ENCODE measurements at regions of chr1 and their contacts with region 1.

Region 1: DNA sequence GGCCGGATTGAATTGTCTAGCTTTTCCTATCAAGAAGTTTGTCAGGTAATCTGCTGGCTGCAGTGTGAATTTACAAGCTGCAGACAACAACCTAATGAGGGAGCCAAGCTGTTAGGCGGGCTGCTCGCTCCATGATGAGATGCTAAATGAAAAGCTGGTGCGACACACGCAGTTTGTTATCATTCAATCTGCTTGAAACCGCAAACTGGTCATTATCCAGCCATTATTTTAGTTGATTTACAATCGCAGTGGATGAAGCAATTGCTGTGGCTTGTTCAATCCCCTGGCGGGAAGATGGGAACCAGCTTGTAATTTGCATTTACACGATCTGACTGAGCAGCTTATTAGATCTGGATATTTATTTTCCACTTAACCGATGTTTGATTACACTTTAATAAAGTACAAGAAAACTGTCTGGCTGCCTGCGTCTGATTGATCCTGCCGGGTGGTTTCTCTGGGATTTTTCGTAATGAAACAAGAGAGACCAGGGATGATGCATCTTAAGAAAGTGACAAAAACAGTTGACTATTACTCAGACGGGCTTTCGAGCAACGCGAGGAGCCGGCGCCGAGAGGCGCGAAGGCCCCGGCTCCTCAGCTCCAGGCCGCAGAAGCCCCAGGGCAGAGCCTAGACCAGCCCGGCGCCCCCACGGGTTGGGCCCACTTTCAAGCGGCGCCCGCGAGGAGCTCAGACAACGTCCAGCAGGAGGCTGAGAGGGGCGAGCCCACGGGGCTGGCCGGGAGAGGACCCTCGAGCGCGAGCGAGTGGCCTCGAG is 118.0 kb upstream of the BARHL2 start:
- DNase-seq: peak in 2 of 9 experiments; percentile 7 to 18
- ATAC-seq: no peak
- H3K4me3 ChIP-seq: peak overlapping the region in 1 of 2 experiments; percentile 1
- H3K4me3 Mint-ChIP-seq: peak overlapping the region; percentile 38
- H3K27ac ChIP-seq: no peak overlapping the region
- H3K27ac Mint-ChIP-seq: no peak overlapping the region
- H3K4me1 ChIP-seq: peaks cover 24% of the 10 kb centered on the region
- H3K4me1 Mint-ChIP-seq: peaks cover 19% of the 10 kb centered on the region
- H3K27me3 ChIP-seq: peaks cover 48 to 67% of the 10 kb centered on the region in 2 experiments
- H3K27me3 Mint-ChIP-seq: peaks cover 80% of the 10 kb centered on the region
- CTCF ChIP-seq: no peak

Region 2: GRCh38 chr1:90721210-90722194 is 113.6 kb before region 1 on chr1:
- CTCF ChIA-PET with region 1: no interaction called
- POLR2A ChIA-PET with region 1: no interaction called
- intact Hi-C with region 1: loop called in 1 of 2 experiments (anchors 10 kb)
- DNase-seq: peak in 6 of 9 experiments; percentile 20 to 69 (median 46)
- ATAC-seq: peak; percentile 50
- H3K4me3 ChIP-seq: no peak overlapping the region
- H3K4me3 Mint-ChIP-seq: no peak overlapping the region
- H3K27ac ChIP-seq: no peak overlapping the region
- H3K27ac Mint-ChIP-seq: no peak overlapping the region
- H3K4me1 ChIP-seq: peaks cover 37% of the 10 kb centered on the region
- H3K4me1 Mint-ChIP-seq: peaks cover 47% of the 10 kb centered on the region
- H3K27me3 ChIP-seq: peaks cover 74 to 83% of the 10 kb centered on the region in 2 experiments
- H3K27me3 Mint-ChIP-seq: peaks cover 81% of the 10 kb centered on the region
- CTCF ChIP-seq: peak; percentile 62

Region 3: DNA sequence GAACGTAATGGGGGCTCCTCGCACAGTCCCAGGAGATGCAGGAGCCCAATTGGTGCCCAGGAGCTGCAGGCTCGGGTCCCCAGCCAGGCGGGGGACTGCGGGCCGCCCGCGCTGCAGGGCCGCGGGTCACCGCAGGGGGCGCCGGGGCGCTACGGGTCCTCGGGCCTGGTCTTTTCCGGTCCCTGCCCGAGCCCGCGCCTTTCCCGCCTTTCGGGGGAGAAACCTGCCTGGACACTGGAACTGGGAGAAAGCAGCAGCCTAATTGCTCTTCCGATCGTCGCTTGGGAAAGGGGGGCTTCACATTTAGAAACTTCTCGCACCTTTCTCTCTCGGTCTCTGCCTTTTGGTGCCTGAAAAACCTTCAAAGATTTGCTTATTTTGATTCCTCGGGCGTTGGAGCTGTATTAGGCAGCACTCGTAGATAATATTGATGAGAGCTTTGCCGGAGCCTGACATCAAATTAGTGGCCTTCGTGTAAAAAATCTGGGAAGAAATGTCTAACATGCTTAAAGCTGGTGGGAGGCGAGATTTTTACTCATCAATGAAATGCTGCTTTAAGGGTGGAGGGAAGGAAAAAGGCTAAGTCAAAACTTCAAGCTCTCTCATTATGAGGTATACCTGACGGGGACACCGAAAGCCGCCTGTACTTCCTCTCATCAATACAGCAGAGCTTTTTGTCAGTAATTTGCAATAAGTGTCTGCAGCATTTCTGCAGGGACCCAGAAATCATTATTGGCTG is 105.4 kb before region 1 on chr1:
- CTCF ChIA-PET with region 1: no interaction called
- POLR2A ChIA-PET with region 1: no interaction called
- intact Hi-C with region 1: loop called (anchors 5 to 10 kb)
- DNase-seq: peak in 1 of 9 experiments; percentile 27
- ATAC-seq: peak; percentile 21
- H3K4me3 ChIP-seq: peak overlapping the region in 1 of 2 experiments; percentile 22
- H3K4me3 Mint-ChIP-seq: peak overlapping the region; percentile 79
- H3K27ac ChIP-seq: no peak overlapping the region
- H3K27ac Mint-ChIP-seq: no peak overlapping the region
- H3K4me1 ChIP-seq: peaks cover 40% of the 10 kb centered on the region
- H3K4me1 Mint-ChIP-seq: peaks cover 52% of the 10 kb centered on the region
- H3K27me3 ChIP-seq: peaks cover 41 to 64% of the 10 kb centered on the region in 2 experiments
- H3K27me3 Mint-ChIP-seq: peaks cover 85% of the 10 kb centered on the region
- CTCF ChIP-seq: peak; percentile 34

Region 4: GRCh38 chr1:90850898-90851710 is 16.0 kb after region 1 on chr1:
- CTCF ChIA-PET with region 1: no interaction called
- POLR2A ChIA-PET with region 1: no interaction called
- intact Hi-C with region 1: loop called in 1 of 2 experiments (anchors 2 kb)
- DNase-seq: peak; percentile 41 to 87 (median 73)
- ATAC-seq: peak; percentile 96
- H3K4me3 ChIP-seq: peak overlapping the region; percentile 64 to 78
- H3K4me3 Mint-ChIP-seq: peak overlapping the region; percentile 81
- H3K27ac ChIP-seq: no peak overlapping the region
- H3K27ac Mint-ChIP-seq: no peak overlapping the region
- H3K4me1 ChIP-seq: peaks cover 15% of the 10 kb centered on the region
- H3K4me1 Mint-ChIP-seq: peaks cover 12% of the 10 kb centered on the region
- H3K27me3 ChIP-seq: peaks cover 14 to 18% of the 10 kb centered on the region in 2 experiments
- H3K27me3 Mint-ChIP-seq: peaks cover 53% of the 10 kb centered on the region
- CTCF ChIP-seq: peak; percentile 62